ENCODE measurements at regions of chr12 and their contacts with region 1.

Region 1: DNA sequence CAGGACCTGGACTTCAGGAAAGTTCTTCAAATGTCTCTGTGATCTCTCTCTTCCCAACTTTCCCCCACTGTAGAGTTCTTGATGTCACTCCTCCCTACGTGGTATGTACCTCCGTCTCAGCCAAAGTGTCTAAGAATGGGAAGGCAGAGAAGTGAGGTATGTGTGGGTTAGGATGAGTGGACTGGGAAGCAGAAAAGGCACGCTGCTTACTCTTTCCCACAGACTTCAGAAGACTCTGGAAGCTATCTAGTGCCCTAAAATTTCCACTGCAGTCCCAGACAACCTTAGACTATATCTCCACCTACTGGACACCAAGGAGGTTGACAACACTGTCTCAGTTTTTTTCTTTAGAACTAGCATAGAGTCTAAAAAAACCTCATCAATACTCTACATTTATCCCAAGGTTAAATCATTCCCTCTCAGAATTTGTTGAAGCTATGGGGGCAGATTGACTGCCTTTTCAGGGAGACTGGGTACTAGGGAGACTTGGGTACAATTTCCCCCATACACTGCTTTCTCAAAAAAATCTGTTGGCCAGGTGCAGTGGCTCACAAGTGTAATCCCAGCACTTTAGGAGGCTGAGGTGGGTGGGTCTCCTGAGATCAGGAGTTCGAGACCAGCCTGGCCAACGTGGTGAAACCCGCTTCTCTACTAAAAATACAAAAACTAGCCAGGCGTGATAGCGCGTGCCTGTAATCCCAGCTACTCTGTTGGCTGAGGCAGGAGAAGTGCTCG is 20.6 kb upstream of the ITGA5 start:
- DNase-seq: peak; percentile 77
- H3K4me3 ChIP-seq: no peak overlapping the region
- H3K27ac ChIP-seq: peak overlapping the region; percentile 6
- H3K4me1 ChIP-seq: peaks cover 7% of the 10 kb centered on the region
- H3K27me3 ChIP-seq: no peaks in the 10 kb centered on the region
- CTCF ChIP-seq: peak; percentile 62 to 64
- POLR2A ChIP-seq: no peak

Region 2: GRCh38 chr12:54229624-54230212 is 210.0 kb before region 1 on chr12:
- CTCF ChIA-PET with region 1: no interaction called
- POLR2A ChIA-PET with region 1: no interaction called
- dilution Hi-C with region 1: no loop called
- intact Hi-C with region 1: no loop called
- DNase-seq: peak; percentile 74
- H3K4me3 ChIP-seq: no peak overlapping the region
- H3K27ac ChIP-seq: peak overlapping the region; percentile 32
- H3K4me1 ChIP-seq: peaks cover 20% of the 10 kb centered on the region
- H3K27me3 ChIP-seq: no peaks in the 10 kb centered on the region
- CTCF ChIP-seq: no peak
- POLR2A ChIP-seq: no peak

Region 3: GRCh38 chr12:54368709-54369583 is 70.7 kb before region 1 on chr12:
- CTCF ChIA-PET with region 1: interaction called, 42 read pairs
- POLR2A ChIA-PET with region 1: no interaction called
- dilution Hi-C with region 1: no loop called
- intact Hi-C with region 1: loop called (anchors 1 kb)
- DNase-seq: peak; percentile 85
- H3K4me3 ChIP-seq: peak overlapping the region; percentile 6 to 39 (median 23)
- H3K27ac ChIP-seq: no peak overlapping the region
- H3K4me1 ChIP-seq: peaks cover 33% of the 10 kb centered on the region
- H3K27me3 ChIP-seq: no peaks in the 10 kb centered on the region
- CTCF ChIP-seq: peak; percentile 91 to 92
- POLR2A ChIP-seq: no peak

Region 4: DNA sequence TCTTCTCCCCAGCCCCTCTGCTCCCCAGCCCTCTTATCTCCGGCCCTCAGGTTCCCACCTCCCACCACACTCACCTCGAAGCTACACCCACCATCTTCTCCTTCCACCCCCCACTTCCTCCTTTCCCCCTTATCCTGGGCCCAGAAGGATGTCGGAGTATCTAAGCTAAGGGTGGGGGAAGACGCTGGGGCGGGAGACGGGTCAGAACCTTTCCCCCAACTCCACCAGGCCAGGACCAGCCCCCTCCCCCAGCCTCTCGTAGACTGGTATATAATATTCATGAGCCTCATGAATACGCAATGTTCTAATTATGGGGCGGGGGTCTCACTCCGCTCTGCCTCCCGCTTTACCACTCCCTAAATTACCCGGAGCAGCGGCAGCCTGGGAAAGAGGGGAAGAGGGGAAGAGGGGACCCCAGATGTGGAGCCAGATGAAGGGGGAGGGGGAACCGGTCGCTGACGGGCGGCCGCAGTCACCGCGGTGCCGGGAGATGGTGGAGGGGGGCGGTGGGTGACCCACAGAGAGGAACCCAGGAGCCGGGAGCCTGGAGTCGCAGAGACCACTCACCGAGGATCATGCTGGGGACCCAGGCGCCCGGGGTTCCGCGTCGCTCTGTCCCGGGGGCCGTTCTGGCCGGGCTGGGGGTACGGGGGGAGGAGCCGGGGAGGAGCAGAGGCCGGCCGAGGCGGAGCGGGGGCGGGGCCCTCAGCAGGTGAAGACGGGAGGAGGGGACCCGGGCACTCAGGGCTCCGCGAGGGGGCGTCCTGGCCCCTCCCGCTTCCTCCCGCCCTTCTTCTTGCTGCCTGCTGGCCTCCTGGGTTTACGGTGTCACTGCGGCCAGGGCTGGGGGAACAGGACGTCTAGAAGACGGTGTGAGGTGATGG is 48.8 kb before region 1 on chr12:
- CTCF ChIA-PET with region 1: interaction called, 517 read pairs
- POLR2A ChIA-PET with region 1: interaction called, 3 read pairs
- dilution Hi-C with region 1: no loop called
- intact Hi-C with region 1: no loop called
- DNase-seq: no peak
- H3K4me3 ChIP-seq: no peak overlapping the region
- H3K27ac ChIP-seq: no peak overlapping the region
- H3K4me1 ChIP-seq: no peaks in the 10 kb centered on the region
- H3K27me3 ChIP-seq: no peaks in the 10 kb centered on the region
- CTCF ChIP-seq: no peak
- POLR2A ChIP-seq: no peak

Region 5: DNA sequence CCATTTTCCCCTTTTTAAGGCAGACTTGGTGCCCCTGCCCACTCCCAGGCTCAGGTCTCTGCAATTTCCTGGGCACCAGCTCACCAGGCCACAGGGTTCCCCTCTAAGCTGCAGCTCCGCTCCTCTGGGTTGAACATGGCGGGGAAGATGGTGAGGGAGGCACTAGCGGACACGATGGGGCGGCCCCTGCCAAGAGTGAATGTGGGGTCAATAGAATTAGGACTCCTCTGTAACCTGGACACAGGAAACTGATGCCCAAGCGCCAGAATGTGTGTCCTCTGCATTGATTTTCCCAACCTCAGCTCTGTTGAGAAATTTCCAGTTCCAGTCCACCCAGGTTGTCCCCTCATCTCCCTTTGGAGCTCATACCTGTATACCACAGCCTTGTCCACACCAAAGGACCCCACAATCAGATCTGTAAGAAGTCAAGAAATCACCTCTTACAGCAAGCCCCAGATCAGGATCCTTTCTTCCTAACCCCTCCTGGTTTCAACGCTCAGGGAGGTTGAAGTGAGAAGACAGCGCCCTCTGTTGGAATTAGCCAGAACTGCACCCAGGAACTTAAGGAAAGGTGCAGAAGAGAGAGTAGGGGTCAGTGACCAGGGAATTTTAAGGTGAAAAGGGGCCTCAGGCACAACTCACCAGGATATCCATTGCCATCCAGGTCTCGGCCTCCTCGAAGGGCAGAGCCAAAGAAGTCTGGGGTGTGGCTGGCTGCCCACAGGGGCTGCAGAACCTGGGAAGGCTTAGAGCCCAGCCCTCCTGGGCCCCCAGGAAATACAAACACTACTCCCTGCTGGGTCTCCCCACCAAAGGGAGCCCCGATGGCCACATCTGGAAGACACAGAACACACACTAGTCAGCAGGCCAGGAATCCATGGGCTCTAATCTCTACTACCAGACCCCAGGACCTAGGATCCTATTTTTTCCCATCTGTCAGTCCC is 35.4 kb before region 1 on chr12:
- CTCF ChIA-PET with region 1: interaction called, 517 read pairs
- POLR2A ChIA-PET with region 1: interaction called, 8 read pairs
- dilution Hi-C with region 1: no loop called
- intact Hi-C with region 1: loop called (anchors 1 kb)
- DNase-seq: peak; percentile 68
- H3K4me3 ChIP-seq: no peak overlapping the region
- H3K27ac ChIP-seq: no peak overlapping the region
- H3K4me1 ChIP-seq: peaks cover 9% of the 10 kb centered on the region
- H3K27me3 ChIP-seq: no peaks in the 10 kb centered on the region
- CTCF ChIP-seq: peak; percentile 83 to 94
- POLR2A ChIP-seq: no peak

Region 6: DNA sequence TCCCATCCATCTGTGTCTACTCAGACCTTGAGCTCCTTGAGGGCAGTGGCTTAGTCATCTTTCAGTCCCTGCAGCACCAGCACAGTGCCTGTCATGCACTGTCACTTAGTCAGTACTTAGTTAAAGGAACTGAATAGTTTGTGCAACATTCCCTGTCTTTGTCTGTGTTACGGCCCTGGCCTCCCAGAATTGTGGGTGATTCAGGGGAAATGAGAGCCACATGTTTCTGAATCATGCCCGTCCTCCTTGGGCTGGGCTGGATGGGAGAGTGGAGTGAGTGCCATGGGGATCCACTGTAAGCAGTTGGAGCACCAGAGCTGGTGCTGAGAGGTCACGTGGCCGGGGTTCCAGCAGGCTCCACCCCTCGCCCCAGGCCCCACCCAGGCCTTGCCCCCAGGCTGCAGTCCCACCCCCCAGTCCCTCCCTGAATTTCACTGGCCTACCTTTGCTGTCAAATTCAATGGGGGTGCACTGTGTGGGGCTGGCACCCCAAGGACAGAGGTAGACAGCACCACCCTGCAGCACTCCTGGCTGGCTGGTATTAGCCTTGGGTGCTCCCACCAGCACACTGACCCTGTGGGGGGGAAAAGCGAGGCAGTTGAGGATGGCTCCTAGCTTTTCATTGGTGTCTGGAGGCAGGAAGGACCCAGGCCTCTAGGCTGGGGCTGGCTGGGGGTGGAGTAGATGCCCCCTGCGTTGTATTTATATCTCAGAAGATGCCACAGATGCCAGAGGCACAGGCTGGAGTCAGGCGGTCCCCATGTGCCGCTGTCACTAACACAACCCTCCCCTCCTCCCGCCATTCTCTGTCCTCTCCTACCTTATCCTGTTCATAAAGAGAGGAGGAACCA is 28.1 kb before region 1 on chr12:
- CTCF ChIA-PET with region 1: interaction called, 517 read pairs
- POLR2A ChIA-PET with region 1: interaction called, 4 read pairs
- dilution Hi-C with region 1: no loop called
- intact Hi-C with region 1: loop called (anchors 1 kb)
- DNase-seq: peak; percentile 88
- H3K4me3 ChIP-seq: no peak overlapping the region
- H3K27ac ChIP-seq: peak overlapping the region; percentile 96
- H3K4me1 ChIP-seq: peaks cover 58% of the 10 kb centered on the region
- H3K27me3 ChIP-seq: no peaks in the 10 kb centered on the region
- CTCF ChIP-seq: no peak
- POLR2A ChIP-seq: no peak

Region 7: DNA sequence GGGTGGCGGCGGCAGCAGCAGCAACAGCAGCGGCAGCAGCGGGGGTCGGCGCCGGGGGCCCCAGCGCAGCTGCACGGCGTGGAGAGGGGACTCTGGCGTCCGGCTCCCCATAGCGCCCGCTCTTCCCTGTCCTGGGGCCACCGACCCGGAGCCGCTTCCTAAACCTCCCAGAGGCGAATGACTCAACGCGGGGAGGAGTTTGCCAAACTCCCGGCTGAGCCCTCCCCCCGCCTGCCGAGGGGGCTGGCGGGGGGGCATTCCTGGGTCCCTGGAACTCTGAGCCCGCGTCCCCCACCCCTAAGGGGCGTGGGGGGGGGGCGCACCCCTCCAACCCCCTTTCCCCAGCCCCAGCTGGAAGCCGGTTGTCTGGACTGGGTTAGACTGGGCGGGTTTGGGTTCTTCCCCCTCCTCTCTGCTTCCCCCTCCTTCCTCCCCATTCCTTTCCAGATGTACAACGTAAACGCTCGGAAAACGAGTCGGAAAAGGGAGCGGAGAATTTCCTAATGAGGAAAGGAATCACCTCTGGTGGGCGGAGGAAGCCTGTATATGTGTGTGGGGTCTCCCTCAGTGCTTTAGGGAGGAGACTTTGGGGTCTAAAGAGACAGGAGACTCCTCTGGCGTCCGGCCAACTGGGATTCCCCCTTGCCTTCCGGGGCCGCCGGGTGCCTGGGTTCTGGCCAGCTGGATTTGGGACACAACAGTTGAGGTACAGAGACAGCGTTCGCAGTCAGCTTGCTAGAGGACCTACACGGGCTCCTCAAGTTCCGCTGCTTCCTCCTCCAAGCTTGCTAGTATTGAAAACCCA is 20.4 kb before region 1 on chr12 and contains the start of gene ITGA5:
- CTCF ChIA-PET with region 1: interaction called, 221 read pairs
- POLR2A ChIA-PET with region 1: interaction called, 5 read pairs
- dilution Hi-C with region 1: no loop called
- intact Hi-C with region 1: loop called (anchors 1 kb)
- DNase-seq: peak; percentile 75
- H3K4me3 ChIP-seq: peak within 1 kb of the TSS; percentile 65 to 97 (median 83)
- H3K27ac ChIP-seq: peak within 1 kb of the TSS; percentile 79
- H3K4me1 ChIP-seq: peaks cover 68% of the 10 kb centered on the region
- H3K27me3 ChIP-seq: no peaks in the 10 kb centered on the region
- CTCF ChIP-seq: no peak
- POLR2A ChIP-seq: peak; percentile 90
- total RNA-seq, gene ITGA5: 938 and 994 TPM in 2 replicates

Measured in endothelial cell of umbilical vein (primary cell).